Prostate gland (tissue), 2 donors: ENCODE measurements at regions of chr3 and their contacts with region 1.

Region 1: DNA sequence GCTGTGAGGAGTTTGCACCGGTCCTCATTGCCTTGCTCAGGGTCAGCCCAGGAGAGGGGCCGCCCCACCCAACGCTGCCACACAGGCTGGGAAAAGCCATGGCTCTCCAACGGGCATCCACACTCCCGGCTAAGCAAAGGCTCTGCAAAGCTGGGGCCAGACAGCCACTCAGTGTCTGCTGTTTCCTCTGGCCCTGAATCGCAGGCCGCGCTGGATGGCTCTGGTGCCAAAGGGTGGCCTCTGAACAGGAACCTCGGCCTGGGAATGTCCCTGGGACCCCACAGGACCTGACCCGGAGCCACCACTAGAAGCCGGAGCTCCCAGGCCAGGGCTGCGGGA is 42.9 kb downstream of the RPN1 start:
- DNase-seq: no peak
- H3K4me3 ChIP-seq: peak overlapping the region; percentile 39 to 49
- H3K27ac ChIP-seq: peak overlapping the region; percentile 53 to 76
- H3K4me1 ChIP-seq: no peaks in the 10 kb centered on the region
- H3K27me3 ChIP-seq: no peaks in the 10 kb centered on the region
- CTCF ChIP-seq: no peak
- POLR2A ChIP-seq: no peak

Region 2: GRCh38 chr3:127574880-127575878 is 1032.5 kb before region 1 on chr3:
- intact Hi-C with region 1: loop called (anchors 10 kb)
- DNase-seq: peak; percentile 87
- H3K4me3 ChIP-seq: no peak overlapping the region
- H3K27ac ChIP-seq: no peak overlapping the region
- H3K4me1 ChIP-seq: no peaks in the 10 kb centered on the region
- H3K27me3 ChIP-seq: no peaks in the 10 kb centered on the region
- CTCF ChIP-seq: peak; percentile 91 to 99 (median 98)
- POLR2A ChIP-seq: no peak

Region 3: DNA sequence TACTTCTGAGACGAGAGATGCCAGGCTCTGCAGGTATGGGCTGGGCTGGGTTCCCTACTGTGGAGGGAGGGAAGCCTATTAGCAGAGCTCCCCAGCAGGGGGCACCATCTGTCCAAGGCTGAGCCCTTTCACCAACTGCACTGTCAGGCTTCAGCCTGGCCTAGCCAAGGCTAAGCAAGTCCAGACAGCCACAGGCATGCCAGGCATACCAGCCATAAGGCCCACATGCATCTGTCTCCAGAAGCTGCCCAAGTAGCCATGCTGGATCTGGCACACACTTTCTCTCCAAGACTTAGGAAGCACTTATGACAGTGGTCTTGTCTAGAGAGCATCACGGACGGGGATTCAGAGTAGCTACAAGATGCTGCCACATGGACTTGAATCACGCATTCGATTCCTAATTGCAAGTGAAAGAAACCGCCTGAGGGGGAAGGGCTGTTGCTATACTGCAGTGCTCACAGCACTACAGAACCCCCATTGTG is 512.4 kb before region 1 on chr3:
- intact Hi-C with region 1: loop called (anchors 5 kb)
- DNase-seq: peak; percentile 90
- H3K4me3 ChIP-seq: no peak overlapping the region
- H3K27ac ChIP-seq: peak overlapping the region in 1 of 2 donors; percentile 39
- H3K4me1 ChIP-seq: no peaks in the 10 kb centered on the region
- H3K27me3 ChIP-seq: no peaks in the 10 kb centered on the region
- CTCF ChIP-seq: peak; percentile 39 to 93 (median 74)
- POLR2A ChIP-seq: no peak

Region 4: DNA sequence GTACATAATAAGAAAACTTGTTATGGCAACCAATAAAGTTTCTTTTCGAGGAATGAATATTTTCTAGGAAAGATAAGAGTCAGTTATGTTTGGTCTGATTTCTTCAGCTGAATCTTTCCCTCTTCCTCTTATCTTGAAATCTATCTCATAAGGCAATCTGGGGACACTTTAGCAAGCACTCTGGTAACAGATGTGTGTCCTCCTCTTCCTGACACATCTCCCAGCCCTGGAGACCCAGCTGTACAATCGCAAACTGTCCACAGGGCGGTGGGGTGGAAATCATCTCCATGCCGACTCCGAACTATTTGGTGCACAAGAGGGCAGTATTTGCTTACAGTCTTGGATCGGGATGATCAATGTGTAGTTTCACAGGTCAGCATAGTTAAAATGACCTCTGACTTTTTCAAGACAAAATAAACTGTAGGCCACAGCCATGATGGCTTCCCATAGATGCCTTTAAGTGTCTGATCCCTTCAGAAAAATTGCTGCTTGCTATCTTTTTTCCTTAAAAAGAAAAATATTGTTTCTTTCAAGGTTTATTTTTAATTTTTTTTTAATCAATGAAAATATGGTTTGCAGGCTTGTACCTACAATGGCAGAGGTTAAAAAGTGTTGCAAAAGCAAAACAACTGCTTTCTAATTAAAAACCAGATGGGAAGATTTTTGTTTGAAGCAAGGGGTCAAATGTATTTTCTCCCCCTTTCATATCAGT is 436.7 kb before region 1 on chr3:
- intact Hi-C with region 1: loop called (anchors 5 kb)
- DNase-seq: peak; percentile 60
- H3K4me3 ChIP-seq: no peak overlapping the region
- H3K27ac ChIP-seq: no peak overlapping the region
- H3K4me1 ChIP-seq: no peaks in the 10 kb centered on the region
- H3K27me3 ChIP-seq: no peaks in the 10 kb centered on the region
- CTCF ChIP-seq: peak; percentile 34 to 89 (median 71)
- POLR2A ChIP-seq: no peak

Region 5: GRCh38 chr3:128753715-128754114 is 146.0 kb after region 1 on chr3:
- intact Hi-C with region 1: no loop called
- DNase-seq: no peak
- H3K4me3 ChIP-seq: no peak overlapping the region
- H3K27ac ChIP-seq: no peak overlapping the region
- H3K4me1 ChIP-seq: no peaks in the 10 kb centered on the region
- H3K27me3 ChIP-seq: no peaks in the 10 kb centered on the region
- CTCF ChIP-seq: no peak
- POLR2A ChIP-seq: no peak

Region 6: DNA sequence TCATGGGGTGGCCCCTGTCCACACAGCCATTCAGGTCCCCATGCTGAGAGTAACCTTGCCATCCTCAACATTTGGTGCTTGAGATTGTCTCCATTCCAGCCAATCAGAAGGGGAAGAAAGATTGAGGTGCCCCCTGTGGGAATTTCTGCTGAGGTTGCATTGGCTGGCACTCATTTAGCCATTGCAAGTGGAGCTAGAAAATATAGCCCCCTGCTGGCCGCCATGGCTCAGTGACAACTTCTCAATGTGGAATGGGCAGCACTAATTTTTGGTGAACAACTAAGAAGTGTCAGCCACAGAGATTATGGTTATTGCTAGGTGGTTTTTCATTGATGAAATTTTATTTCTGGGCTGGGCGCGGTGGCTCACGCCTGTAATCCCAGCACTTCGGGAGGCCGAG is 1931.3 kb after region 1 on chr3:
- intact Hi-C with region 1: no loop called
- DNase-seq: no peak
- H3K4me3 ChIP-seq: no peak overlapping the region
- H3K27ac ChIP-seq: no peak overlapping the region
- H3K4me1 ChIP-seq: no peaks in the 10 kb centered on the region
- H3K27me3 ChIP-seq: peaks cover 2% of the 10 kb centered on the region
- CTCF ChIP-seq: peak in 3 of 4 experiments; percentile 21 to 40 (median 33)
- POLR2A ChIP-seq: no peak